CD4-positive, alpha-beta memory T cell (primary cell): ENCODE measurements at regions of chr6 and their contacts with region 1.

Region 1: GRCh38 chr6:75243333-75244062 is at the start of gene COX7A2:
- DNase-seq: peak; percentile 84 to 92 (median 87)
- H3K4me3 ChIP-seq: peak within 1 kb of the TSS; percentile 90 to 93
- H3K4me3 Mint-ChIP-seq: peak within 1 kb of the TSS; percentile 96 to 99 (median 98)
- H3K27ac ChIP-seq: peak within 1 kb of the TSS; percentile 96
- H3K27ac Mint-ChIP-seq: peak within 1 kb of the TSS; percentile 91 to 100 (median 99)
- H3K4me1 ChIP-seq: peaks cover 24% of the 10 kb centered on the region
- H3K4me1 Mint-ChIP-seq: peaks cover 14 to 47% (median 24%) of the 10 kb centered on the region in 4 donors
- H3K27me3 ChIP-seq: no peaks in the 10 kb centered on the region
- H3K27me3 Mint-ChIP-seq: peaks cover 4 to 9% of the 10 kb centered on the region in 2 donors
- total RNA-seq, gene COX7A2: 188 to 201 TPM

Region 2: GRCh38 chr6:75278474-75279077 is 35.1 kb after region 1 on chr6:
- CTCF ChIA-PET with region 1: interaction called, 13 read pairs
- POLR2A ChIA-PET with region 1: interaction called, 44 read pairs
- intact Hi-C with region 1: no loop called
- DNase-seq: no peak
- H3K4me3 ChIP-seq: no peak overlapping the region
- H3K4me3 Mint-ChIP-seq: peak overlapping the region in 4 of 8 donors; percentile 4 to 9 (median 7)
- H3K27ac ChIP-seq: no peak overlapping the region
- H3K27ac Mint-ChIP-seq: peak overlapping the region; percentile 0 to 66 (median 6)
- H3K4me1 ChIP-seq: peaks cover 79% of the 10 kb centered on the region
- H3K4me1 Mint-ChIP-seq: peaks cover 59 to 72% (median 66%) of the 10 kb centered on the region in 4 donors
- H3K27me3 ChIP-seq: no peaks in the 10 kb centered on the region
- H3K27me3 Mint-ChIP-seq: no peaks in the 10 kb centered on the region